IMR-90 (cell line): ENCODE measurements at regions of chrX and their contacts with region 1.

Region 1: DNA sequence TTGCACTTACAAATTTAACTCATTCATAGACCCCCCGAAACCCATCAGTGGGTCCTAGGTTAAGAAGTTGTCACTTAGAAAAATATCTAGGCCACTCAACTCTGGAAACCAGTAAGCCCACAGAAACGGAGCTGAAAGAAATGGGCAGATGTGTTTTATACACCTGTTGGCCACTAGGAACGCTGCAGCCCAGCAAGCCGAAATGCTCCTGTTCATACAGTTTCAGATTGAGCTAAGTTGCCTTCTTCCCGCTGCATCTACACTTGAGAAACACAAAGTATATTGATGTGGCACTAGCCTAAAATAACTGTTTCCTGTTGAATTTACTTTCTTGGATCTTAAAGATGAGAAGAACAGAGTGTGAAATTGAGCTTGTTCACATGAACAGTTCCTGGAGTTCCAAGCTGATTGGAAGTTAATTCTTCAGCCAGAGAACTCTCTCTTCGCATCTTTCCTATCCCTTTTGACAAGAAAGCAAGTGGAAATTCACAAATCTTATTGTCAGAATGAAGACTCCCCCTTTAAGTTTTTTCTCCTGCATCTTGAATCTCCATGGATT is 174.1 kb downstream of the RBMX2 start:
- DNase-seq: peak; percentile 33
- ATAC-seq: peak; percentile 81
- H3K4me3 ChIP-seq: no peak overlapping the region
- H3K27ac ChIP-seq: no peak overlapping the region
- H3K4me1 ChIP-seq: no peaks in the 10 kb centered on the region
- H3K27me3 ChIP-seq: peaks cover 2% of the 10 kb centered on the region; the same call in 1 of the 2 replicates
- CTCF ChIP-seq: peak; percentile 74
- POLR2A ChIP-seq: no peak
- RAD21 ChIP-seq: peak; percentile 84

Region 2: GRCh38 chrX:130560544-130560943 is 15.4 kb before region 1 on chrX:
- CTCF ChIA-PET with region 1: interaction called, 10 read pairs
- POLR2A ChIA-PET with region 1: no interaction called
- dilution Hi-C with region 1: no loop called
- in situ Hi-C with region 1: no loop called
- intact Hi-C with region 1: no loop called
- DNase-seq: no peak
- ATAC-seq: no peak
- H3K4me3 ChIP-seq: no peak overlapping the region
- H3K27ac ChIP-seq: no peak overlapping the region
- H3K4me1 ChIP-seq: no peaks in the 10 kb centered on the region
- H3K27me3 ChIP-seq: peaks cover 2% of the 10 kb centered on the region; the same call in 1 of the 2 replicates
- CTCF ChIP-seq: no peak
- POLR2A ChIP-seq: no peak
- RAD21 ChIP-seq: no peak